OCI-LY7 (cell line): ENCODE measurements at regions of chr10 and their contacts with region 1.

Region 1: GRCh38 chr10:110067960-110068770 is 60.4 kb downstream of the ADD3 start:
- DNase-seq: peak; percentile 28
- H3K4me3 ChIP-seq: no peak overlapping the region
- H3K27ac ChIP-seq: no peak overlapping the region
- H3K4me1 ChIP-seq: peaks cover 66% of the 10 kb centered on the region
- CTCF ChIP-seq: no peak

Region 2: GRCh38 chr10:110007701-110008517 is 60.3 kb before region 1 on chr10 and contains the start of gene ADD3:
- CTCF ChIA-PET with region 1: no interaction called
- POLR2A ChIA-PET with region 1: interaction called, 6 read pairs
- intact Hi-C with region 1: loop called (anchors 2 kb)
- DNase-seq: peak; percentile 97
- H3K4me3 ChIP-seq: peak within 1 kb of the TSS; percentile 96
- H3K27ac ChIP-seq: peak within 1 kb of the TSS; percentile 84
- H3K4me1 ChIP-seq: peaks cover 62% of the 10 kb centered on the region
- CTCF ChIP-seq: no peak
- total RNA-seq, gene ADD3: 53.3 and 75.8 TPM in 2 replicates

Region 3: GRCh38 chr10:110260746-110261477 is 192.7 kb after region 1 on chr10:
- CTCF ChIA-PET with region 1: no interaction called
- POLR2A ChIA-PET with region 1: no interaction called
- intact Hi-C with region 1: no loop called
- DNase-seq: no peak
- H3K4me3 ChIP-seq: no peak overlapping the region
- H3K27ac ChIP-seq: no peak overlapping the region
- H3K4me1 ChIP-seq: no peaks in the 10 kb centered on the region
- CTCF ChIP-seq: no peak

Region 4: GRCh38 chr10:110430369-110431273 is 362.5 kb after region 1 on chr10:
- CTCF ChIA-PET with region 1: no interaction called
- POLR2A ChIA-PET with region 1: no interaction called
- intact Hi-C with region 1: no loop called
- DNase-seq: no peak
- H3K4me3 ChIP-seq: no peak overlapping the region
- H3K27ac ChIP-seq: no peak overlapping the region
- H3K4me1 ChIP-seq: peaks cover 45% of the 10 kb centered on the region
- CTCF ChIP-seq: no peak